ENCODE measurements at regions of chr12 and their contacts with region 1.

Region 1: DNA sequence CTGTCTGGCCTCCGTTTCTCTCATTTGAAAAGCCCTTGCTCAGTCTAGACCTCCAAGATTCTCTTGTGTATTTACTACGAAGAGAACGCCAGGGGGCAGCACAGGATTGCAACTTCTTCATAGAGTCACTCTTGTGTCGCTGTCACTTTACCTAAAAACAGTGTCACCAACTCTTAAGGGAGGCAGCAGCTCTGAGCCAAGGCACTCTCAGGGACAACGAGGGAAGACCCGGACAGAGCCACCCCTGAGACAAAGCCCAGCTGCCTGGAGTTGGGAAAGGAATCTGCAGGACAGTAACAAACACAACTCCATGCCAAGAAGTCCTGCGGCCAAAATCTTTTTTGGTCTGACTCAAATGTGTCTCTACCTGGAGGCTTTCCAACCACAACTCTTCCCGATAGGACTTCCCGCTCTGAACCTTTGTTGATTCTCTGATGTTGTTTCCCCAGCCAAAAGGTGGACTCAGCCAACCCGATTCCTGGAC is 9.6 kb upstream of the RPAP3 start:
- DNase-seq: peak; percentile 87
- ATAC-seq: peak; percentile 86
- H3K4me3 ChIP-seq: no peak overlapping the region
- H3K4me3 Mint-ChIP-seq: no peak overlapping the region
- H3K27ac ChIP-seq: no peak overlapping the region
- H3K27ac Mint-ChIP-seq: peak overlapping the region; percentile 33
- H3K4me1 ChIP-seq: peaks cover 15 to 28% of the 10 kb centered on the region in 2 donors
- H3K4me1 Mint-ChIP-seq: peaks cover 37% of the 10 kb centered on the region
- H3K27me3 ChIP-seq: no peaks in the 10 kb centered on the region
- H3K27me3 Mint-ChIP-seq: no peaks in the 10 kb centered on the region
- CTCF ChIP-seq: peak; percentile 86

Region 2: GRCh38 chr12:47636908-47637780 is 78.3 kb before region 1 on chr12:
- CTCF ChIA-PET with region 1: no interaction called
- POLR2A ChIA-PET with region 1: no interaction called
- intact Hi-C with region 1: no loop called
- DNase-seq: peak; percentile 31
- ATAC-seq: no peak
- H3K4me3 ChIP-seq: no peak overlapping the region
- H3K4me3 Mint-ChIP-seq: no peak overlapping the region
- H3K27ac ChIP-seq: no peak overlapping the region
- H3K27ac Mint-ChIP-seq: peak overlapping the region; percentile 15
- H3K4me1 ChIP-seq: no peaks in the 10 kb centered on the region
- H3K4me1 Mint-ChIP-seq: no peaks in the 10 kb centered on the region
- H3K27me3 ChIP-seq: no peaks in the 10 kb centered on the region
- H3K27me3 Mint-ChIP-seq: no peaks in the 10 kb centered on the region
- CTCF ChIP-seq: peak; percentile 35

Region 3: DNA sequence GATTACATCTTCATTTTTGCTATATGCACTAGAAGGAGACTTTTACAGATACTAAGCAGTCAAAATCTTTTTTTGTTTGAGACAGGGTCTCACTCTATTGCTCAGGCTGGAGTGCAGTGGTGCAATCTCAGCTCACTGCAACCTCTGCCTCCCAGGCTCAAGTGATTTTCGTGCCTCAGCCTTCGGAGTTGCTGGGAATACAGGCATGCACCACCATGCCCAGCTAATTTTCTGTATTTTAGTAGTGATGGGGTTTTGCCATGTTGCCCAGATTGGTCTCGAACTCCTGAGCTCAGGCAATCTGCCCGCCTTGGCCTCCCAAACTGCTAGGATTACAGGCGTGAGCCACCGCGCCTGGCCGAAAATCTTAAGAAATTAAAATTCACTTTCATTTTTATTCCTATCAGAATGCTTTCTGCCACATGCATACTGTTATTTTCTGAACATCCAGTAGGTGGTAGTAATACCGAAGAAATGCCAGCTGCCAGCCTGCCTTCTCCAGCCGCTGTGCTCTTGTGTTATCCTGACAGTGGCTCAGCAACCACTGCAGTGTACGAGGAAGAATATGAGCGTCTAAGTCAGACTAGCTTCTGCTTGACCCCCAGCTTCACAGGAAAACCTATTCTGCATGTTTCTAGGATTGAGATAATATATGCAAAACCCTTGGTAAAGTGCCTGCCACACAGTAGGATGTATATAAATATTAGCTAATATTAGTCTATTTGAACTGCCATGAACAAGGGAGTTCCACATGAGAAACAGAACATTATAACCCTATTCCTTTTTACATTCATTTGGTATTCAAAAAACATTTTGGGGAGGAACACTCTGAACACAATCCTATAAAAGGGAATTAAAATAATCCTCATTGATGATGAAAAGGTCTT is 63.8 kb before region 1 on chr12:
- CTCF ChIA-PET with region 1: interaction called, 5 read pairs
- POLR2A ChIA-PET with region 1: no interaction called
- intact Hi-C with region 1: loop called (anchors 1 kb)
- DNase-seq: peak; percentile 66
- ATAC-seq: peak; percentile 83
- H3K4me3 ChIP-seq: no peak overlapping the region
- H3K4me3 Mint-ChIP-seq: no peak overlapping the region
- H3K27ac ChIP-seq: no peak overlapping the region
- H3K27ac Mint-ChIP-seq: no peak overlapping the region
- H3K4me1 ChIP-seq: peaks cover 0 to 12% of the 10 kb centered on the region in 2 donors
- H3K4me1 Mint-ChIP-seq: peaks cover 13% of the 10 kb centered on the region
- H3K27me3 ChIP-seq: no peaks in the 10 kb centered on the region
- H3K27me3 Mint-ChIP-seq: no peaks in the 10 kb centered on the region
- CTCF ChIP-seq: peak; percentile 82

Region 4: GRCh38 chr12:47725893-47726292 is 10.5 kb after region 1 on chr12:
- CTCF ChIA-PET with region 1: interaction called, 21 read pairs
- POLR2A ChIA-PET with region 1: no interaction called
- intact Hi-C with region 1: no loop called
- DNase-seq: no peak
- ATAC-seq: peak; percentile 82
- H3K4me3 ChIP-seq: no peak overlapping the region
- H3K4me3 Mint-ChIP-seq: peak overlapping the region; percentile 5
- H3K27ac ChIP-seq: no peak overlapping the region
- H3K27ac Mint-ChIP-seq: no peak overlapping the region
- H3K4me1 ChIP-seq: peaks cover 9 to 20% of the 10 kb centered on the region in 2 donors
- H3K4me1 Mint-ChIP-seq: peaks cover 24% of the 10 kb centered on the region
- H3K27me3 ChIP-seq: no peaks in the 10 kb centered on the region
- H3K27me3 Mint-ChIP-seq: no peaks in the 10 kb centered on the region
- CTCF ChIP-seq: no peak

Region 5: DNA sequence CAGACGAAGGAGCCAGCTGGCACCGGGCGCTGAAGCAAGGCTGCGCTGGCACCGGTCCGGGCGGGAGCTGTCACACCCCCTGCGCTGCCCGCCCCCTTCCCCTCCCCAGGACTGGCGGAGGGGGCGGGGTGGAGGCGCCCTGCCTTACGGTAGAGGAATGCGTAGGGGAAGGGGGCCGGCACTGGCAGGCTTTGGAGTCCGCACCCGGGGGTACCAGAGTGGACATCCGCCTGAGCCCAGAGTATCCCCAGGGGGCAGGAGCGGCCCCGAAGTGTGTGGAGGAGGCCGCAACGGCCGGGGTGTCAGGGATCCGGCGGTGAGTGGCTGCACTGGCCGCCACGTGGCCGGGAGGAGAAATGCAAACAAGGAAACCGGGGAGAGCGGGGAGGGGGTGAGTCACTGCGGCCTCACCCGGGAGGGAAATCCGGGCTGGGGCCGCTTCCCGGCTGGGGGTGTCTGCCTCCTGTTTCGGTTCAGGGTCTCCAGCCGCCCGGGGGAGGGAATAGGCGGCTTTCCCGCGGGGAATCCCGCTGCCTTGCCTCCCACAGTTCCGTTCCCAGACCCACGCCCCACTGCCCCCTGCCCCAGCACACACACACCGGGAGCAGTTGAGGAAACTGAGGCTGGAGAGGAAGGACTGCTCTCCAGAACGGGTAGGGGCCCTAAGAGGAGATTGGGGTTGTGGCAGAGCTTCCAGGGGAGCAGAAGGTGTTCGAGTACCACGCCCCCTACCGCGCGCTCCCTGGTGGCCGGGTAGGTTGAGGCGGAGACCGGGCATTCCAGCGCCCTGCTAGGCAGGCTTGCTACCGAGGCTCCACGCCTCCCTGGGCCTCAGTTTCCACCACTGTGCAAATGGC is 43.6 kb after region 1 on chr12 and contains the start of gene RAPGEF3:
- CTCF ChIA-PET with region 1: interaction called, 98 read pairs
- POLR2A ChIA-PET with region 1: interaction called, 3 read pairs
- intact Hi-C with region 1: loop called (anchors 1 kb)
- DNase-seq: peak; percentile 78
- ATAC-seq: peak; percentile 77
- H3K4me3 ChIP-seq: peak within 1 kb of the TSS; percentile 15 to 71 (median 67)
- H3K4me3 Mint-ChIP-seq: peak within 1 kb of the TSS; percentile 85
- H3K27ac ChIP-seq: peak within 1 kb of the TSS in 1 of 2 donors; percentile 23
- H3K27ac Mint-ChIP-seq: peak within 1 kb of the TSS; percentile 50
- H3K4me1 ChIP-seq: peaks cover 52 to 66% of the 10 kb centered on the region in 2 donors
- H3K4me1 Mint-ChIP-seq: peaks cover 53% of the 10 kb centered on the region
- H3K27me3 ChIP-seq: no peaks in the 10 kb centered on the region
- H3K27me3 Mint-ChIP-seq: no peaks in the 10 kb centered on the region
- CTCF ChIP-seq: peak; percentile 70
- total RNA-seq, gene RAPGEF3: 5.2 and 5.4 TPM in 2 replicates

Region 6: GRCh38 chr12:47779301-47779942 is 64.0 kb after region 1 on chr12:
- CTCF ChIA-PET with region 1: interaction called, 584 read pairs
- POLR2A ChIA-PET with region 1: no interaction called
- intact Hi-C with region 1: loop called (anchors 1 kb)
- DNase-seq: peak; percentile 90
- ATAC-seq: peak; percentile 90
- H3K4me3 ChIP-seq: no peak overlapping the region
- H3K4me3 Mint-ChIP-seq: no peak overlapping the region
- H3K27ac ChIP-seq: no peak overlapping the region
- H3K27ac Mint-ChIP-seq: peak overlapping the region; percentile 80
- H3K4me1 ChIP-seq: peaks cover 0 to 14% of the 10 kb centered on the region in 2 donors
- H3K4me1 Mint-ChIP-seq: peaks cover 23% of the 10 kb centered on the region
- H3K27me3 ChIP-seq: no peaks in the 10 kb centered on the region
- H3K27me3 Mint-ChIP-seq: no peaks in the 10 kb centered on the region
- CTCF ChIP-seq: peak; percentile 92

Region 7: GRCh38 chr12:48165094-48165981 is 449.9 kb after region 1 on chr12:
- CTCF ChIA-PET with region 1: interaction called, 3 read pairs
- POLR2A ChIA-PET with region 1: no interaction called
- intact Hi-C with region 1: loop called (anchors 1 kb)
- DNase-seq: peak; percentile 79
- ATAC-seq: peak; percentile 82
- H3K4me3 ChIP-seq: no peak overlapping the region
- H3K4me3 Mint-ChIP-seq: no peak overlapping the region
- H3K27ac ChIP-seq: no peak overlapping the region
- H3K27ac Mint-ChIP-seq: no peak overlapping the region
- H3K4me1 ChIP-seq: no peaks in the 10 kb centered on the region
- H3K4me1 Mint-ChIP-seq: no peaks in the 10 kb centered on the region
- H3K27me3 ChIP-seq: peaks cover 0 to 13% (median 1%) of the 10 kb centered on the region in 4 experiments
- H3K27me3 Mint-ChIP-seq: peaks cover 22% of the 10 kb centered on the region
- CTCF ChIP-seq: peak; percentile 96

Measured in B cell (primary cell).